ENCODE measurements at regions of chr7 and their contacts with region 1.

Region 1: DNA sequence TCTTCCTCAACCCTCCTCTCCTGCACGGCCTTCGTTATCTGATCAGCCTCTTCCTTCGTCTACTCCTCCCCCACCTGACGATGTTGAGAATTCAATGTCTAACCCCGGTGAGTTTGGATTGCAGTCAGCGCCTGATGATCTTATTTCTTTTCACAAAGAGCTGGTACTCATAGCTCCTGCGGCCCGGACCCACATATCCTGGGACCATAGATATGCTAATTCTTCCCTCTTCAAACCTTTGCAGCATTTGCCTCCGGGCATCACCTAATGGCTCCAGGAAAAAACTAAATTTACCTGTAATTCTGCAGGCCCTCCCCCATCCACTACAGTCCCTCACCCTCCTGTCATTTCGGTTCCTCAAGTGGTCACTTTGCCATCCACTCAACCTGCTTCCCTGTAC is 12.4 kb upstream of the DDC start:
- DNase-seq: no peak
- ATAC-seq: no peak
- H3K4me3 ChIP-seq: no peak overlapping the region
- H3K27ac ChIP-seq: no peak overlapping the region
- H3K4me1 ChIP-seq: no peaks in the 10 kb centered on the region
- H3K27me3 ChIP-seq: no peaks in the 10 kb centered on the region
- CTCF ChIP-seq: no peak
- POLR2A ChIP-seq: no peak
- RAD21 ChIP-seq: no peak

Region 2: GRCh38 chr7:50502001-50502684 is 75.4 kb before region 1 on chr7:
- CTCF ChIA-PET with region 1: no interaction called
- POLR2A ChIA-PET with region 1: no interaction called
- dilution Hi-C with region 1: no loop called
- in situ Hi-C with region 1: no loop called
- intact Hi-C with region 1: loop called (anchors 10 kb)
- DNase-seq: peak; percentile 87
- ATAC-seq: peak; percentile 95
- H3K4me3 ChIP-seq: no peak overlapping the region
- H3K27ac ChIP-seq: peak overlapping the region; percentile 46; the same call in 1 of the 2 replicates
- H3K4me1 ChIP-seq: peaks cover 2% of the 10 kb centered on the region; the same call in 1 of the 2 replicates
- H3K27me3 ChIP-seq: peaks cover 12% of the 10 kb centered on the region
- CTCF ChIP-seq: no peak
- POLR2A ChIP-seq: no peak
- RAD21 ChIP-seq: no peak

Region 3: DNA sequence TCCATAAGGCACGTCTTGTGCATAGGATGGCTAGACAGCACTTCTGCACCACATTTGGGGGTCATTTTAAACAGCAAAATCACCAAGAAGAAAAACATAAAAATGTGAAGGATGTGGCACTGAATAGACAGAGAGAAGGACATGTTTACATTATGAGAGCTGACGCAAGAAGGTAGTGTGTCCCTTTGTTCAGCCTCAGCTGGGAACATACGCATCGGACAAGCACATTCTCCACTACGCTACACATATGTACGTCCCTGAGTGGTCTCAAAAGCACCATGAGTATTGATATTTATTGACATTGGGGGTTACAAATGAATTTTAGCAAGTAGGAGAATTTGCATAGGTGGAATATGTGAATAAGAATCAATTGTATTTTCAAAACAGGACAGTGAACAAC is 32.6 kb before region 1 on chr7:
- CTCF ChIA-PET with region 1: no interaction called
- POLR2A ChIA-PET with region 1: no interaction called
- dilution Hi-C with region 1: no loop called
- in situ Hi-C with region 1: no loop called
- intact Hi-C with region 1: no loop called
- DNase-seq: no peak
- ATAC-seq: no peak
- H3K4me3 ChIP-seq: no peak overlapping the region
- H3K27ac ChIP-seq: no peak overlapping the region
- H3K4me1 ChIP-seq: no peaks in the 10 kb centered on the region
- H3K27me3 ChIP-seq: peaks cover 16% of the 10 kb centered on the region
- CTCF ChIP-seq: no peak
- POLR2A ChIP-seq: no peak
- RAD21 ChIP-seq: no peak

Measured in IMR-90 (cell line).